Endothelial cell of umbilical vein (primary cell): ENCODE measurements at regions of chr2 and their contacts with region 1.

Region 1: DNA sequence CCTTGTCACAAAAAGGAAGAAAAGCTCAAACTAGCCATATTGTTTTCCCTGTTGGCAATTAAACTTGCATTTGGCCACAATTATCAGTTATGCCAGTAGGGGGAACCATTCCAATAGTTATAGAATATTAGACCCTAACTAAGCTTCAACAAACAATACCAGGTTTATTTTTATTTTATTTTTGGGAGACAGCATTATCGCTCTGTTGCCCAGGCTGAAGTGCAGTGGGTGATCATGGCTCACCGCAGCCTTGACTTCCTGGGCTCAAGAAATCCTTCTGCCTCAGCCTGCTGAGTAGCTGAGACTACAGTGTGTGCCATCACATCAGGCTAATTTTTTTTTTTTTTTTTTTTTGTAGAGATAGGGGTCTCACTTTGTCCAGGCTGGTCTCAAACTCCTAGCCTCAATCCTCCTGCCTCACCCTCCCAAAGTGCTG is 102.1 kb downstream of the ATAD2B start:
- DNase-seq: peak; percentile 78
- H3K4me3 ChIP-seq: no peak overlapping the region
- H3K27ac ChIP-seq: no peak overlapping the region
- H3K4me1 ChIP-seq: no peaks in the 10 kb centered on the region
- H3K27me3 ChIP-seq: no peaks in the 10 kb centered on the region
- CTCF ChIP-seq: peak; percentile 51 to 57
- POLR2A ChIP-seq: no peak

Region 2: GRCh38 chr2:23183733-23184132 is 641.1 kb before region 1 on chr2:
- CTCF ChIA-PET with region 1: no interaction called
- POLR2A ChIA-PET with region 1: no interaction called
- dilution Hi-C with region 1: no loop called
- intact Hi-C with region 1: no loop called
- DNase-seq: no peak
- H3K4me3 ChIP-seq: no peak overlapping the region
- H3K27ac ChIP-seq: no peak overlapping the region
- H3K4me1 ChIP-seq: no peaks in the 10 kb centered on the region
- H3K27me3 ChIP-seq: no peaks in the 10 kb centered on the region
- CTCF ChIP-seq: no peak
- POLR2A ChIP-seq: no peak

Region 3: GRCh38 chr2:23566236-23567142 is 258.3 kb before region 1 on chr2:
- CTCF ChIA-PET with region 1: no interaction called
- POLR2A ChIA-PET with region 1: no interaction called
- dilution Hi-C with region 1: no loop called
- intact Hi-C with region 1: no loop called
- DNase-seq: peak; percentile 30
- H3K4me3 ChIP-seq: no peak overlapping the region
- H3K27ac ChIP-seq: no peak overlapping the region
- H3K4me1 ChIP-seq: no peaks in the 10 kb centered on the region
- H3K27me3 ChIP-seq: no peaks in the 10 kb centered on the region
- CTCF ChIP-seq: peak; percentile 51 to 55
- POLR2A ChIP-seq: no peak

Region 4: DNA sequence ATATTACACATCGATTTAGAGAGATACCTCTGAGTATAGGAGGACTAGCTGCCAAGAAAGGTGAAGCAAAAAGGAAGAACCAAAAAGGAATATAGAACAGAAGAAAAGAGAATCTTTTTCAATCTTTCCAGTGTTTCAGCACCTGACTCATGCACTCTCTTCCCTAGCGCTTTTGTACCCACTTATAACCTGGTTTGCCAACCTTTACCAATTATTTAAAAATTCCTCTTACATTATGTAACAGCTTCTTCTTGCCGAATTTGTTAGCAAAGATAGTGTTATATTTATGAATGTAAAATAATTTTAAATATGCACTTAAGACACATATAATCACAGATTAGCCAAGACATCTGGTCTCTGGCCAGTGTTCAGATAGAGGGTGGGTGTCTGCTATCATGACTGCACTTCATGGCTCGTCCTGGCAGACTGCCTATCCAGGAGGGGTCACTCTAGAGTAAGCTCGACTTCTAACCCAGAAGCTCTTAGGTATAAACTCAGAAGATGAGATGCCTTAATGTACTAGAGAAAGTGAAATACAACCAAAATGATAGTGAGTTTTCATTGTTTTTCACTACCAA is 20.7 kb before region 1 on chr2:
- CTCF ChIA-PET with region 1: interaction called, 11 read pairs
- POLR2A ChIA-PET with region 1: no interaction called
- dilution Hi-C with region 1: no loop called
- intact Hi-C with region 1: no loop called
- DNase-seq: peak; percentile 19
- H3K4me3 ChIP-seq: no peak overlapping the region
- H3K27ac ChIP-seq: no peak overlapping the region
- H3K4me1 ChIP-seq: no peaks in the 10 kb centered on the region
- H3K27me3 ChIP-seq: no peaks in the 10 kb centered on the region
- CTCF ChIP-seq: peak; percentile 10 to 15
- POLR2A ChIP-seq: no peak

Region 5: DNA sequence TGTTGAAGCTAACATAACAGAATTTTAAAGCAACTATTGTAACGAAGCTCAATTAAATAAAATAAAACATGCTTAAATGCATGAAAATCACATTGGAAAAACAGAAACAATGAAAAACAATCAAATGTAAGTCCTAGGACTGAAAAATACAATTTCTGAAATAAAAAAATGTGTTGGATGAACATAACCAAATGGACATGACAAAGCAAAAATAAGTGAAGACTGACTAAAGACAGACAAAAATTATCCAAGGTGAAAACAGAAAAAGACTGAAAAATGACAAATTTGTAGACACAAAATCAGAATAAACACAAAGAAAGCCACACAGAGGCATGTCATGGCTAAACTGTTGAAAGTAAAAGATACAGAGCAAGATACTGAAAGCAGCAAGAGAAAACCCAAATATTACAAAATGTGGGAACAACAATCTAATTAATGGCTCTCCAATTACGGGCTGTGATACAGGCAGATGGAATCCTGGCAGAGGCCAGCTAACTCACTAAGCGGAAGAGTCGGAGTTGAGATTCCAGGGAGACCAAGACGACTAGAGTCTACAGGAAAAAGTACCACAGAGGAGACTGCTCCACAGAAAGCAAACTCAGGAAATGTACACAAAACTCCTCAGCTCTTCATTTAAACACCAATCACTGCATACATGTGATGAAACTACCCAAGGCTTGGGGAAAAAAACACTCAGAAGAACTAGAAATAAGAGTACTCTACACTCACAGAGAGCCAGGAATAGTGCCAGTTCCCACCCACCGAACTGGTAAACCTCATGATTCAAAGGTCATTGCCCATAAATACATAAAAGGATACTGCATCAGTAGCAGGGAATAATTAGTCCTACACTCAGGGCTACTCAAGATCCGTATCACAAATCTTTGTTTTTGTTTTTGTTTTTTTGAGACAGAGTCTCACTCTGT is 18.5 kb after region 1 on chr2:
- CTCF ChIA-PET with region 1: interaction called, 10 read pairs
- POLR2A ChIA-PET with region 1: no interaction called
- dilution Hi-C with region 1: no loop called
- intact Hi-C with region 1: no loop called
- DNase-seq: no peak
- H3K4me3 ChIP-seq: no peak overlapping the region
- H3K27ac ChIP-seq: no peak overlapping the region
- H3K4me1 ChIP-seq: no peaks in the 10 kb centered on the region
- H3K27me3 ChIP-seq: no peaks in the 10 kb centered on the region
- CTCF ChIP-seq: no peak
- POLR2A ChIP-seq: no peak

Region 6: DNA sequence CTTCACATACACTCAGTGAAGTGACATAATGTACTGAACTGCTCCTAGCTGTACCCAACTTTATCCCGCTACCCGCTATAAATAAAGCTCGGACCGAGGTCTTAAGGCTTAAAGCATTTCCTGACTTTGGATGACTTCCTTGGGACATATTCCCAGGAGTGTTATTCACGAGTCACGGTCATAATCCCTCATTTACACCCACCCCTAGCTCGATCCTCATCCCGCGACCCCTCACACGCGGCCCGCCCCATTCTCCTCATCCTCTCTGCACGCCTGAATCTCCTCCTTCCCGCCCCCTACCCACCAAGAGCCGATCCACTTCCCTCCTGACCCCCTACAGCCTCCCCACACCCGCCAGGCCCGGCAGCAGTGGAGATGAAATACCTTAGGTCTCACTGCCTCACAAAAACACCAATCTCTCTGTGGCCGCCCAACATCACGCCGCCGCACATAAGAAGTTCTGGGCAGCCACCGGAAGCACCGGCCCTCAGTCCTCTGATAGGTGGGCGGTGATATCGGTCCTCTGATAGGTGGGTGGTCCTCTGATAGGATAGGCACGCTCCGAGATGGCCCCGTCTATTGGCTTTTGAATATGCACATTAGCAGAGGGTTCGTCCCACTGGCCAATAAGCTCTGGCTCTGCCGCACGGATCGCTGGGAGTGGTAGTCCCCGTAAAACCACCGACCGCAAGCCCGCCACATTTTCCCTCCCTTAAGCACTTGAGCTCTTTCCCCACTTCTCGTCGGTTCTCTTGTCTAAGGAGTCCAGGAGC is 222.3 kb after region 1 on chr2 and contains the start of gene WDCP:
- CTCF ChIA-PET with region 1: interaction called, 14 read pairs
- POLR2A ChIA-PET with region 1: interaction called, 3 read pairs
- dilution Hi-C with region 1: no loop called
- intact Hi-C with region 1: no loop called
- DNase-seq: peak; percentile 99
- H3K4me3 ChIP-seq: peak within 1 kb of the TSS; percentile 89 to 95 (median 89)
- H3K27ac ChIP-seq: peak within 1 kb of the TSS; percentile 36
- H3K4me1 ChIP-seq: peaks cover 23% of the 10 kb centered on the region
- H3K27me3 ChIP-seq: no peaks in the 10 kb centered on the region
- CTCF ChIP-seq: no peak
- POLR2A ChIP-seq: peak; percentile 97
- total RNA-seq, gene WDCP: 15.4 and 15.9 TPM in 2 replicates

Region 7: DNA sequence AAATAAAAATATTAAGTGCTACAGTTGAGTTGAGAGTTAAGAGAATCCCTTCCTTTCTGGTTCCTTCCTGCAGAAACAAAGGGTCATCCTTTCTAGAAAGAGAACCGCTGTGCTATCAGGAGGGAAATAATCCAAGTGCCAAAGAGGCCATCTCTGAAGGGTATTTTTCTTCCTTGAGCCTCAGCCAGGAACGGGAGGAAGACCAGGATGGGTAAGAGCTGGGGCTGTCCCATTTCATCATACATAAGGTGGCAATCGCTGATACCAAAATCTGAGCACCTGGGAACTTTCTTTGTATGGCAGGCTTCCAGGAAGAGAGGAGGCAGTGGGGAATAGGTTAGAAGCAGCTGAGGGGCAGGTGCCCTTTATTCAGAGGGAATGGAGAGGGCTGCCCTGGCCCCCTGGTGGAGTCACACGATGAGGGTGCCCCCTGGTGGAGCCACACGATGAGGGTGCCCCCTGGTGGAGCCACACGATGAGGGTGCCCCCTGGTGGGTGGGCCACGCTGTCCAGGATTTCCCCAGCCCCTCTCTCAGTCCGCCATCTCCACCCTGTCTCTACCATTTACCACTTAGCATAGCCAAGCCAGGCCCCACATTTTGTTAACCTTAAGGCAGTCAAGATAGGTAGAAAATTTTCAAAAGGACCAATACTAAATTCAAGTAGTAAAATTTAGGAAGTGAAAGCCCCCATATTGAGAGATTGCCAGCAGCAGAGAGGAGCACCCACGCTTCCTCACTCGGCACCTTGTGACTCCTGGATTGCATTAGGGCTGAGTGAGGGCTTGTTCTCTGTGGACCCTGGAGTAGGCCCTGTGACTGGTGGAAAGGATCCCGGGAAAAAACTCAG is 339.6 kb after region 1 on chr2:
- CTCF ChIA-PET with region 1: interaction called, 27 read pairs
- POLR2A ChIA-PET with region 1: no interaction called
- dilution Hi-C with region 1: no loop called
- intact Hi-C with region 1: loop called (anchors 1 kb)
- DNase-seq: no peak
- H3K4me3 ChIP-seq: no peak overlapping the region
- H3K27ac ChIP-seq: no peak overlapping the region
- H3K4me1 ChIP-seq: no peaks in the 10 kb centered on the region
- H3K27me3 ChIP-seq: no peaks in the 10 kb centered on the region
- CTCF ChIP-seq: peak; percentile 64 to 76
- POLR2A ChIP-seq: no peak